BJ (cell line): ENCODE measurements at regions of chr20 and their contacts with region 1.

Region 1: GRCh38 chr20:17542993-17543412 is 11.8 kb upstream of the BFSP1 start:
- DNase-seq: peak; percentile 94
- H3K4me3 ChIP-seq: no peak overlapping the region
- H3K27me3 ChIP-seq: no peaks in the 10 kb centered on the region
- CTCF ChIP-seq: no peak

Region 2: GRCh38 chr20:17556837-17557654 is 14.0 kb after region 1 on chr20:
- CTCF ChIA-PET with region 1: interaction called, 9 read pairs
- POLR2A ChIA-PET with region 1: interaction called, 16 read pairs
- DNase-seq: no peak
- H3K4me3 ChIP-seq: no peak overlapping the region
- H3K27me3 ChIP-seq: no peaks in the 10 kb centered on the region
- CTCF ChIP-seq: no peak

Region 3: GRCh38 chr20:17569616-17570346 is 26.8 kb after region 1 on chr20 and contains the start of gene DSTN:
- CTCF ChIA-PET with region 1: interaction called, 35 read pairs
- POLR2A ChIA-PET with region 1: interaction called, 15 read pairs
- DNase-seq: peak; percentile 70
- H3K4me3 ChIP-seq: peak within 1 kb of the TSS; percentile 98
- H3K27me3 ChIP-seq: no peaks in the 10 kb centered on the region
- CTCF ChIP-seq: no peak
- polyA plus RNA-seq, gene DSTN: 295 and 536 TPM in 2 replicates

Region 4: DNA sequence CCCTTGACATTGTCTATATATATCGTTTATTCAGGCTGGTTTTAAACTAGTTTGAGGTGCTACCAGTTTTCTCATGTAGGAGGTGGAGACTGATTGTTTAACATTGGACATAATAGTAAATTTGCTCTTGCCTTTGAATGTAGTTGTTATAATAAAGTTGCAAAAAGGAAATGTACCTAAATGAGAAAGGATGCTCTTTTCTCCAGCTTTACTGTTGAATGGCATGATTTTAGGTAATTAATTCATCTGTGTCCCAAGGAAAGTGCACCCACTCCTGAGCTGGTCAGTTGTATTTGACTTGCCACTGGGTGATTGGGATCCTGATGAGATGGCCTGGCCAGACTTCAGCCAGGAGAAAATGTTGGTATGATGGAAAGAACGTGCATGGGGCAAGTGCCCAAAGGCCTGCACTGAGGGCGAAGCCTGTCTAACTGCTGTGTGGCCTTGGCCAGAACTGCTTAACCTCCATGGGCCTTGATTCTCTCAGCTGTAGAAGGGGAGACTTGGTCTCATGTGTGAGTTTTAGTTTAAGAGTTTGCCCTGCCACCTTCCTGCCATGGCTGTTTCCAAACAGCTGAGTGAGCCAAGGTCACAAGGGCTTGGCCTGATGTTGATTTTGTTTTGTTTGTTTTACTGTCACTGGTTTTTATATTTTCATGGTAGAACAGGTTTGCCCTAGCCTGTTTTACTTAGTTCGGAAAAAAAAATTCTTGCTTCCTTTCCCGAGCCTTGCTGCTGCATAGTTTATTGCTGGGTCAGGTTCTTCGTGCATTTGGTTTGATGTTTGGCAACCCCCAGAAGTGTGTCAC is 62.1 kb after region 1 on chr20:
- CTCF ChIA-PET with region 1: interaction called, 13 read pairs
- POLR2A ChIA-PET with region 1: no interaction called
- DNase-seq: no peak
- H3K4me3 ChIP-seq: no peak overlapping the region
- H3K27me3 ChIP-seq: no peaks in the 10 kb centered on the region
- CTCF ChIP-seq: no peak

Region 5: GRCh38 chr20:17710379-17711266 is 167.6 kb after region 1 on chr20:
- CTCF ChIA-PET with region 1: no interaction called
- POLR2A ChIA-PET with region 1: no interaction called
- DNase-seq: no peak
- H3K4me3 ChIP-seq: no peak overlapping the region
- H3K27me3 ChIP-seq: 0 out of 2 replicates have a peak, but pooled peaks cover 1% of the 10 kb centered on the region
- CTCF ChIP-seq: no peak

Region 6: GRCh38 chr20:17873410-17874270 is 330.6 kb after region 1 on chr20:
- CTCF ChIA-PET with region 1: no interaction called
- POLR2A ChIA-PET with region 1: interaction called, 12 read pairs
- DNase-seq: peak; percentile 89
- H3K4me3 ChIP-seq: no peak overlapping the region
- H3K27me3 ChIP-seq: no peaks in the 10 kb centered on the region
- CTCF ChIP-seq: no peak

Region 7: DNA sequence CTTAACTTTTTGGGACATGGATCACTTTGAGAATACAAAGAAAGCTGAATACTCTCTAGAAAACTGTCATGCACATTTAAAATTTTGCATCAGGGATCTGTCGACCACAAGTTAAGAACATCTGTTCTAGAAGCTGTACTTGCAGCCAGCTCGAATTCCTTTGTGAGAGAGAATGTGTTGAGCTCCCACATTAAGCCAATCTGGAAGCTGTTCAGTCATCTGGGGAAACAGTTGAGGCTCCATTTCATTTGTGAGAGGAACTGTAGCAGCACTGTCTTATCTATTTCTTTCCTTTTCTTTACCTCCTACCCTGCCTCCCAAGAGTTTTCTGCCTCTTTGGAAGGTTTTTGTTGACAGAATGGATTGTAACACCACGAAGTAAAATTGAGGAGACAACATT is 645.4 kb after region 1 on chr20:
- CTCF ChIA-PET with region 1: no interaction called
- POLR2A ChIA-PET with region 1: no interaction called
- DNase-seq: no peak
- H3K4me3 ChIP-seq: no peak overlapping the region
- H3K27me3 ChIP-seq: no peaks in the 10 kb centered on the region
- CTCF ChIP-seq: no peak